Activated B cell treated with CpG ODN at 0.5 μM for 24 hours (primary cell): ENCODE measurements at regions of chr20 and their contacts with region 1.

Region 1: GRCh38 chr20:50861012-50861411 is 66.2 kb downstream of the BCAS4 start:
- DNase-seq: no peak
- ATAC-seq: no peak
- H3K4me3 Mint-ChIP-seq: no peak overlapping the region
- H3K27ac Mint-ChIP-seq: no peak overlapping the region
- H3K4me1 Mint-ChIP-seq: peaks cover 22% of the 10 kb centered on the region
- H3K27me3 Mint-ChIP-seq: no peaks in the 10 kb centered on the region
- CTCF ChIP-seq: no peak

Region 2: GRCh38 chr20:50844430-50845100 is 16.4 kb before region 1 on chr20:
- CTCF ChIA-PET with region 1: no interaction called
- POLR2A ChIA-PET with region 1: no interaction called
- intact Hi-C with region 1: loop called (anchors 2 kb)
- DNase-seq: peak; percentile 28
- ATAC-seq: peak; percentile 91
- H3K4me3 Mint-ChIP-seq: no peak overlapping the region
- H3K27ac Mint-ChIP-seq: peak overlapping the region; percentile 83
- H3K4me1 Mint-ChIP-seq: peaks cover 47% of the 10 kb centered on the region
- H3K27me3 Mint-ChIP-seq: no peaks in the 10 kb centered on the region
- CTCF ChIP-seq: no peak

Region 3: DNA sequence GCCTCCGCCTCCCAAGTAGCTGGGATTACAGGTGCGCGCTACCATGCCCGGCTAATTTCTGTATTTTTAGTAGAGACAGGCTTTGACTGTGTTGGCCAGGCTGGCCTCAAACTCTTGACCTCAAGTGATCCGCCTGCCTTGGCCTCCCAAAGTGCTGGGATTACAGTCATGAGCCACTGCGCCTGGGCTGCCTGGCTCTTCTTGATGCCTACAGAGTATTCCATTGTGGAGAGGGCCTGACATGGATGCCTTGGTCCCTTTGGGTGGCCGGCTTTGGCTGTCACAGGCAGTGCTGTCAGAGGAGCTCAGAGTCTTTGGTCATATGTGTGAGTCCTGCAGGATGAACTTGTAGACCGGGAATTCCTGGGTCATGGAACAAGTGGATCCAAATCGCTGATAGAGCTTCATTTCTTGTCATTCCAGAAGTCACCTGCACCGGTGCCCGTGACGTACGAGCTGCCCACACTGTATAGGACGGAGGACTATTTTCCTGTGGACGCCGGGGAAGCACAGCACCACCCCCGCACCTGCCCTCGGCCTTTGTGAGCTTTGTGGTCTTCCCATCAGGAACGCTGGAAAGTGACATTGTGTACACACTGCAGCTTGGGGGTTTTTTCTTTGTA is 15.2 kb after region 1 on chr20:
- CTCF ChIA-PET with region 1: no interaction called
- POLR2A ChIA-PET with region 1: interaction called, 10 read pairs
- intact Hi-C with region 1: no loop called
- DNase-seq: no peak
- ATAC-seq: no peak
- H3K4me3 Mint-ChIP-seq: no peak overlapping the region
- H3K27ac Mint-ChIP-seq: no peak overlapping the region
- H3K4me1 Mint-ChIP-seq: peaks cover 17% of the 10 kb centered on the region
- H3K27me3 Mint-ChIP-seq: no peaks in the 10 kb centered on the region
- CTCF ChIP-seq: no peak

Region 4: DNA sequence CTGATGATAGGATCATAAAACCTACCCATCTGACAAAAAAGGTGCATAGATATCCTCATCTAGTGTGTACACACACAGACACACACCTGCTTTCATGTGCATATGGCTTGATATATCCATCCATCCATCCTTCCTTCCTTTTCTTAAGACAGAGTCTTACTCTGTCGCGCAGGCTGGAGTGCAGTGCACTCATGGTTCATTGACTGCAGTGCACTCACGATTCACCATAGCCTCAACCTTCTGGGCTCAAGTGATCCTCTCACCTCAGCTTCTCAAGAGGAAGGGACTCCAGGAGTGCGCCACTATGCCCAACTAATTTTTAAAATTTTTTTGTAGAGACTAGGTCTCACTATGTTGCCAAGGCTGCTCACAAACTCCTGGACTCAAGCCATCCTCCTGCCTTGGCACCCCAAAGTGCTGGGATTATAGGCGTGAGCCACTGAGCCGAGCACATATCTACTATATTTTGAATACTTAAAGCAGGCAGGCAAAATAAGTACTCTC is 43.1 kb after region 1 on chr20:
- CTCF ChIA-PET with region 1: no interaction called
- POLR2A ChIA-PET with region 1: no interaction called
- intact Hi-C with region 1: loop called (anchors 5 kb)
- DNase-seq: no peak
- ATAC-seq: no peak
- H3K4me3 Mint-ChIP-seq: no peak overlapping the region
- H3K27ac Mint-ChIP-seq: peak overlapping the region; percentile 30
- H3K4me1 Mint-ChIP-seq: peaks cover 49% of the 10 kb centered on the region
- H3K27me3 Mint-ChIP-seq: no peaks in the 10 kb centered on the region
- CTCF ChIP-seq: no peak

Region 5: GRCh38 chr20:52104546-52105441 is 1243.8 kb after region 1 on chr20:
- CTCF ChIA-PET with region 1: no interaction called
- POLR2A ChIA-PET with region 1: interaction called, 17 read pairs
- intact Hi-C with region 1: no loop called
- DNase-seq: no peak
- ATAC-seq: no peak
- H3K4me3 Mint-ChIP-seq: peak overlapping the region; percentile 76
- H3K27ac Mint-ChIP-seq: no peak overlapping the region
- H3K4me1 Mint-ChIP-seq: peaks cover 27% of the 10 kb centered on the region
- H3K27me3 Mint-ChIP-seq: peaks cover 32% of the 10 kb centered on the region
- CTCF ChIP-seq: no peak